Testis (tissue), 5 donors: ENCODE measurements at regions of chr18 and their contacts with region 1.

Region 1: DNA sequence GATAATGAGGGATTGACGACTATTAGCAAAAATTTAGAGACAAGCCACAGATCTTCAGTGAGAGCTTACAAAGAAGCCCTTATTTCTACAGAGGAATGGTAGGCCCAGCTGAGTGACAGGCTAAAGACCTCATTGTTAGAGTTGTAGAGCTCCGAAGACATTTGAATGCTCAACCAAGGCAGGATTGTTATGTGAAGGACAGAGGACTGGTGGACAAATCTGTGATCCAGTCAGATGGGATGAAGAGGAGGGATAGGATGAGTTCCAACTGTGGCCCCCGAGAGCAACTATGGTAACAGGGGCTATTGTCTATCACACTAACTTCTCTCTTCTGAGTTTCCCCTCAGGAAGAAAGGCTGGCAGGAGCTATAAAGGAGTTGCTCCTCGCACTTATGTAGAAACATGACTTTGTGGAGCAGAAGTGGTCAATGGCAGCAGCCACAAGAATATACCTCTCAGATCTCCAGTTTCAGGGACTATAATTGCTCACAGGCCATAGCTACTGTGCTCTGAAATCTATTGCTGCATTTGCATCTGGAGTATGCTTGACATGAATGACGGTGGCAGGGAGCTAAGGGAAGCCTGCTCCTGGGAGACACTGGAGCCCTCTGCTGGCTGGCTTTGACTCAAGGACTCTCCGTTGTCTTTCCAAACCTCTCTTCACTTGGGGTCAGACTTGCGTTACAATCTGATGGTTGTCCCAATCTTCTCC is 50.3 kb upstream of the GREB1L start:
- DNase-seq: peak; percentile 80
- H3K4me3 ChIP-seq: no peak overlapping the region
- H3K27ac ChIP-seq: no peak overlapping the region
- H3K4me1 ChIP-seq: no peaks in the 10 kb centered on the region
- H3K27me3 ChIP-seq: no peaks in the 10 kb centered on the region
- CTCF ChIP-seq: peak in 2 of 3 experiments; percentile 17 to 47
- POLR2A ChIP-seq: no peak

Region 2: DNA sequence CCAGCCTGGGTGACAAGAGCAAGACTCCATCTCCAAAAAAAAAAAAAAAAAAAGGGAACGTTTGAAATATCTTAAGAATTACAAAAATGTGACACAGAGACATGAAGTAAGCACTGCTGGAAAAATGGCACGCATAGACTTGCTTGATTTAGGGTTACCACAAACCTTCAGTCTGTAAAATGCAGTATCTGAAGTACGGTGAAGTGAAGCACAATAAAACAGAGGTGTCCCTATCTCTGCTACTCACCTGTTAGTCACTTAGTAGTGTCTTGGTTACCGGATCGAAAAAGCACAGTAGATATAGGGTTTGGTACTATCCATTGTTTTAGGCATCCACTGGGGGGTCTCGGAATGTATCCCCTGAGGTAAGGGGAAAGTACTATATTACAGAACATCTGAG is 38.7 kb after region 1 on chr18:
- intact Hi-C with region 1: no loop called
- DNase-seq: no peak
- H3K4me3 ChIP-seq: no peak overlapping the region
- H3K27ac ChIP-seq: no peak overlapping the region
- H3K4me1 ChIP-seq: no peaks in the 10 kb centered on the region
- H3K27me3 ChIP-seq: no peaks in the 10 kb centered on the region
- CTCF ChIP-seq: no peak
- POLR2A ChIP-seq: no peak

Region 3: GRCh38 chr18:21330122-21330701 is 138.5 kb after region 1 on chr18:
- intact Hi-C with region 1: no loop called
- DNase-seq: peak; percentile 59
- H3K4me3 ChIP-seq: no peak overlapping the region
- H3K27ac ChIP-seq: peak overlapping the region; percentile 60 to 72
- H3K4me1 ChIP-seq: peaks cover 17% of the 10 kb centered on the region
- H3K27me3 ChIP-seq: no peaks in the 10 kb centered on the region
- CTCF ChIP-seq: no peak
- POLR2A ChIP-seq: no peak

Region 4: GRCh38 chr18:21444465-21445023 is 252.8 kb after region 1 on chr18:
- intact Hi-C with region 1: loop called (anchors 10 kb)
- DNase-seq: peak; percentile 67
- H3K4me3 ChIP-seq: no peak overlapping the region
- H3K27ac ChIP-seq: no peak overlapping the region
- H3K4me1 ChIP-seq: no peaks in the 10 kb centered on the region
- H3K27me3 ChIP-seq: no peaks in the 10 kb centered on the region
- CTCF ChIP-seq: peak; percentile 37 to 55 (median 39)
- POLR2A ChIP-seq: no peak